B cell (primary cell): ENCODE measurements at regions of chr17 and their contacts with region 1.

Region 1: DNA sequence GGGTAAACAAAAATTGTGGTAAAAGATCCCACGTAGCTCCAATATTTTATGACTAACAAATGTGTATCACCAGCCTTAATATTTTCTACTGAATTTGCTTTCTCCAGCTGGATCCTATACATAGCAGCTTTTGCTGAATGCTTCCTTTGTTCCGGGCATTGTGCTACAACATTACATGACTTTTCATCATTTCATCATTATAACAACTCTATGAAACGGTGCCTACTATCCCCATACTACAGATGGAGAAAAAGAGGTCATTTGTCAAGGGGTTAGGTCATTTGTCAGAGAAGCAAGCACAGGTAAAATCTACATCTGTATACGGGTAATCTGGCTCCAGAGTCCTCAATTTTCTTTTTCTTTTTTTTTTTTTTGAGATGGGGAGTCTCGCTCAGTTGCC is 74.3 kb downstream of the KANSL1 start:
- DNase-seq: no peak
- ATAC-seq: no peak
- H3K4me3 ChIP-seq: no peak overlapping the region
- H3K4me3 Mint-ChIP-seq: no peak overlapping the region
- H3K27ac ChIP-seq: no peak overlapping the region
- H3K27ac Mint-ChIP-seq: no peak overlapping the region
- H3K4me1 ChIP-seq: peaks cover 30 to 31% of the 10 kb centered on the region in 2 donors
- H3K4me1 Mint-ChIP-seq: peaks cover 70% of the 10 kb centered on the region
- H3K27me3 ChIP-seq: no peaks in the 10 kb centered on the region
- H3K27me3 Mint-ChIP-seq: no peaks in the 10 kb centered on the region
- CTCF ChIP-seq: no peak

Region 2: DNA sequence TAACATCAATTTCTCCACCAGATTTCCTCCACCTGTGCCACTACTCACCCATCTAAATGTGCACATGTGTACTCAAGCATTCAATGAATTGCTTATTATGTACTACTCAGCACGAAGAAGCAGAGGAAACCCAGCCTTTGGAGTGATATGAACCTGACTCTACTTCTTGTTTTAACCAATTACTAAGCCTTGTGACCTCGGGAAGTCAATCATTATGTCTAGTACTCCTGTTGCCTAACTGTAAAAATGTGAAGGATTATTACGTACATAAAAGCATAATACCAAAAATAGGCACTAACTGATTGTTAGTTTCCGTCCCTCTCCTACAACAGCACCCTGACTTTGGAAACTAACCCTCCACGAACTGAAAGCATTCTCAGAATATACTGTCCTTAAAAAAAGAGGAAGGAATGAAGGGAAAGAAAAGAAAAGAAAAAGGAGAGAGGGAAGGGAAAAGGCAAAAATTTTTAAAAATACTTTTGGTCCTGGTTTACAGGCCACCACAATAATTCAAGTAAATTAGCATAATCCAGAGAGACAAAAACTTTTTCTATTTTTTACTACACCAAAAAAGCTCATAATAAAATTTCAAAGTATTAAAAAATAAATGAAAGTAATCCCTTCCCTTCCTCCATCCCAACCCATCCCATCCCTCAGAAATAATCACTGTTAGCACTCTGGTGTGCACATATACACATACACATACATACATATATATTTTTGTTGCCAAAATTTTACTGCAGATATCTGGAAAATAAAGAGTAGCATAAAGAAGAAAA is 20.7 kb after region 1 on chr17:
- CTCF ChIA-PET with region 1: no interaction called
- POLR2A ChIA-PET with region 1: no interaction called
- intact Hi-C with region 1: no loop called
- DNase-seq: no peak
- ATAC-seq: peak; percentile 35
- H3K4me3 ChIP-seq: no peak overlapping the region
- H3K4me3 Mint-ChIP-seq: peak overlapping the region; percentile 57
- H3K27ac ChIP-seq: peak overlapping the region in 1 of 2 donors; percentile 45
- H3K27ac Mint-ChIP-seq: peak overlapping the region; percentile 15
- H3K4me1 ChIP-seq: peaks cover 48 to 73% of the 10 kb centered on the region in 2 donors
- H3K4me1 Mint-ChIP-seq: peaks cover 84% of the 10 kb centered on the region
- H3K27me3 ChIP-seq: no peaks in the 10 kb centered on the region
- H3K27me3 Mint-ChIP-seq: no peaks in the 10 kb centered on the region
- CTCF ChIP-seq: no peak

Region 3: DNA sequence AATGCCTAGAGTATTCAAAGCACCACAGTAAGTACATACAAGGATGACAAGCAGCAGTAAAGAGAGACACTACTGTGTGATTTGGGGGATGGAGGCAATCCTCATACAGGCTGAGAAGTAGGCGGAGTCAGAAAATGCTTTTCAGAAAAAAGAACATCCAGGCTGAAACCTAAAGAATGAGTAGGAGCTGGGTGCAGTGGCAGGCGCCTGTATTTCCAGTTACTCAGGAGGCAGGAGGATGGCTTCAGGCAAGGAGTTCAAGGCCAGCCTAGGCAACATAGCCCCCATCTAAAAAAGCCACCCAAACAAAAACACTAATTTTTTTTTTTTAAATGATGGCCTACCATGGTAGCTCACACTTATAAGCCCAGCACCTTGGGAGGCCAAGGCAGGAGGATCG is 64.0 kb after region 1 on chr17:
- CTCF ChIA-PET with region 1: no interaction called
- POLR2A ChIA-PET with region 1: no interaction called
- intact Hi-C with region 1: no loop called
- DNase-seq: no peak
- ATAC-seq: no peak
- H3K4me3 ChIP-seq: no peak overlapping the region
- H3K4me3 Mint-ChIP-seq: no peak overlapping the region
- H3K27ac ChIP-seq: no peak overlapping the region
- H3K27ac Mint-ChIP-seq: no peak overlapping the region
- H3K4me1 ChIP-seq: peaks cover 35 to 54% of the 10 kb centered on the region in 2 donors
- H3K4me1 Mint-ChIP-seq: peaks cover 84% of the 10 kb centered on the region
- H3K27me3 ChIP-seq: no peaks in the 10 kb centered on the region
- H3K27me3 Mint-ChIP-seq: no peaks in the 10 kb centered on the region
- CTCF ChIP-seq: no peak

Region 4: GRCh38 chr17:46199379-46199778 is 80.4 kb after region 1 on chr17:
- CTCF ChIA-PET with region 1: no interaction called
- POLR2A ChIA-PET with region 1: interaction called, 10 read pairs
- intact Hi-C with region 1: no loop called
- DNase-seq: no peak
- ATAC-seq: no peak
- H3K4me3 ChIP-seq: no peak overlapping the region
- H3K4me3 Mint-ChIP-seq: no peak overlapping the region
- H3K27ac ChIP-seq: no peak overlapping the region
- H3K27ac Mint-ChIP-seq: no peak overlapping the region
- H3K4me1 ChIP-seq: peaks cover 7 to 8% of the 10 kb centered on the region in 2 donors
- H3K4me1 Mint-ChIP-seq: peaks cover 20% of the 10 kb centered on the region
- H3K27me3 ChIP-seq: no peaks in the 10 kb centered on the region
- H3K27me3 Mint-ChIP-seq: no peaks in the 10 kb centered on the region
- CTCF ChIP-seq: no peak